CD4-positive, alpha-beta T cell (primary cell): ENCODE measurements at regions of chr16 and their contacts with region 1.

Region 1: DNA sequence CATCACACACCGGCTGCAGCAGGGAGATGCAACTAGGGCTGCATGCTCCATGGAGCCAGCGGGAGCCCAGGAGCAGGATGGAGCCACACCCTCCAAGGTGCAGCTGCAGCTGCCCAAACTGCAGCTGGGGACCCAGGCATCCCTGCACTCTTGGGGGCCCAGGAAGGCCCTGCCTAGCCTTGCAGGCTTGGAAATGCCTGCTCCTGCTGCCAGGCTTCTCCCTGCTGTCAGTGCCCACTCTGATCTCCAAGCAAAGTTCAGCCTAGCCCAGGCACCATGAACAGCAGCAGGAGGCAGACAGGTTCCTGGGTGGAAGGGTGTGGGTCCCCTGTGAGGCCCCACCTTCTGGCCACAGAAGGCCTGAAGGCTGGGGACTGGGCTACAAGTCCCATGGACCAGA is 1057.1 kb downstream of the CDH8 start:
- DNase-seq: no peak
- ATAC-seq: no peak
- H3K4me3 ChIP-seq: no peak overlapping the region
- H3K4me3 Mint-ChIP-seq: no peak overlapping the region
- H3K27ac ChIP-seq: no peak overlapping the region
- H3K27ac Mint-ChIP-seq: no peak overlapping the region
- H3K4me1 ChIP-seq: no peaks in the 10 kb centered on the region
- H3K4me1 Mint-ChIP-seq: no peaks in the 10 kb centered on the region
- H3K27me3 ChIP-seq: no peaks in the 10 kb centered on the region
- H3K27me3 Mint-ChIP-seq: no peaks in the 10 kb centered on the region
- CTCF ChIP-seq: no peak

Region 2: GRCh38 chr16:60675022-60675421 is 304.1 kb before region 1 on chr16:
- CTCF ChIA-PET with region 1: no interaction called
- POLR2A ChIA-PET with region 1: no interaction called
- intact Hi-C with region 1: loop called in 1 of 2 experiments (anchors 5 kb)
- DNase-seq: no peak
- ATAC-seq: no peak
- H3K4me3 ChIP-seq: no peak overlapping the region
- H3K4me3 Mint-ChIP-seq: no peak overlapping the region
- H3K27ac ChIP-seq: no peak overlapping the region
- H3K27ac Mint-ChIP-seq: no peak overlapping the region
- H3K4me1 ChIP-seq: no peaks in the 10 kb centered on the region
- H3K4me1 Mint-ChIP-seq: no peaks in the 10 kb centered on the region
- H3K27me3 ChIP-seq: no peaks in the 10 kb centered on the region
- H3K27me3 Mint-ChIP-seq: no peaks in the 10 kb centered on the region
- CTCF ChIP-seq: no peak

Region 3: GRCh38 chr16:60991886-60992285 is 12.8 kb after region 1 on chr16:
- CTCF ChIA-PET with region 1: no interaction called
- POLR2A ChIA-PET with region 1: no interaction called
- intact Hi-C with region 1: no loop called
- DNase-seq: no peak
- ATAC-seq: no peak
- H3K4me3 ChIP-seq: no peak overlapping the region
- H3K4me3 Mint-ChIP-seq: no peak overlapping the region
- H3K27ac ChIP-seq: no peak overlapping the region
- H3K27ac Mint-ChIP-seq: no peak overlapping the region
- H3K4me1 ChIP-seq: no peaks in the 10 kb centered on the region
- H3K4me1 Mint-ChIP-seq: no peaks in the 10 kb centered on the region
- H3K27me3 ChIP-seq: no peaks in the 10 kb centered on the region
- H3K27me3 Mint-ChIP-seq: no peaks in the 10 kb centered on the region
- CTCF ChIP-seq: no peak

Region 4: GRCh38 chr16:61228371-61228770 is 249.3 kb after region 1 on chr16:
- CTCF ChIA-PET with region 1: no interaction called
- POLR2A ChIA-PET with region 1: no interaction called
- intact Hi-C with region 1: no loop called
- DNase-seq: no peak
- ATAC-seq: no peak
- H3K4me3 ChIP-seq: no peak overlapping the region
- H3K4me3 Mint-ChIP-seq: no peak overlapping the region
- H3K27ac ChIP-seq: no peak overlapping the region
- H3K27ac Mint-ChIP-seq: no peak overlapping the region
- H3K4me1 ChIP-seq: no peaks in the 10 kb centered on the region
- H3K4me1 Mint-ChIP-seq: no peaks in the 10 kb centered on the region
- H3K27me3 ChIP-seq: no peaks in the 10 kb centered on the region
- H3K27me3 Mint-ChIP-seq: no peaks in the 10 kb centered on the region
- CTCF ChIP-seq: no peak